Mammary epithelial cell (primary cell): ENCODE measurements at regions of chr1 and their contacts with region 1.

Region 1: GRCh38 chr1:55848906-55849305 is 633.7 kb upstream of the USP24 start:
- DNase-seq: peak; percentile 20
- H3K4me3 ChIP-seq: no peak overlapping the region
- H3K27ac ChIP-seq: no peak overlapping the region
- H3K4me1 ChIP-seq: no peaks in the 10 kb centered on the region
- H3K27me3 ChIP-seq: no peaks in the 10 kb centered on the region
- CTCF ChIP-seq: peak in 1 of 2 donors; percentile 64

Region 2: GRCh38 chr1:55478742-55479141 is 370.2 kb before region 1 on chr1:
- CTCF ChIA-PET with region 1: no interaction called
- dilution Hi-C with region 1: no loop called
- in situ Hi-C with region 1: no loop called
- intact Hi-C with region 1: loop called (anchors 2 kb)
- DNase-seq: peak; percentile 21
- H3K4me3 ChIP-seq: no peak overlapping the region
- H3K27ac ChIP-seq: no peak overlapping the region
- H3K4me1 ChIP-seq: peaks cover 3% of the 10 kb centered on the region
- H3K27me3 ChIP-seq: no peaks in the 10 kb centered on the region
- CTCF ChIP-seq: peak; percentile 43

Region 3: GRCh38 chr1:55506686-55507577 is 342.0 kb before region 1 on chr1:
- CTCF ChIA-PET with region 1: no interaction called
- dilution Hi-C with region 1: no loop called
- in situ Hi-C with region 1: no loop called
- intact Hi-C with region 1: loop called (anchors 5 kb)
- DNase-seq: peak; percentile 40
- H3K4me3 ChIP-seq: no peak overlapping the region
- H3K27ac ChIP-seq: no peak overlapping the region
- H3K4me1 ChIP-seq: peaks cover 11% of the 10 kb centered on the region
- H3K27me3 ChIP-seq: no peaks in the 10 kb centered on the region
- CTCF ChIP-seq: no peak

Region 4: DNA sequence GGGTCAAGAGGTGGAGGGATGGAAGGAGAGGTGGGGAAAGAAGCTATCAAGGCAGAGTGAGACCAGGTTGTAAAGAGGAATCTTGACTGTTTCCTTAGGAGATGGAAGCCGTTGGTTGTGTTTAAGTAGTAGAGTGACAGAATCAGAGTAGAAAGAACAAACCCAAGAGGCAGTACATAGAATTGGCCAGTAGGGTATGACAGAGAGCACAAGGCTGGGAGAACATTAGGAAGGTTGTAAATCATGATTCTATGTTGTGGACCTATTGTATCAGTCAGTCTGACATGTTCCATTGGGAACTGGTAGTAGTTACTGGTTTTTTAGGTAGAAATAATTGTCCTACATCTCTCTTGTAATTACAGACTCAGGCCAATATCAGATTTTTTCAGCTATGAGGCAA is 146.8 kb before region 1 on chr1:
- CTCF ChIA-PET with region 1: no interaction called
- dilution Hi-C with region 1: no loop called
- in situ Hi-C with region 1: no loop called
- intact Hi-C with region 1: loop called (anchors 5 kb)
- DNase-seq: peak; percentile 26
- H3K4me3 ChIP-seq: no peak overlapping the region
- H3K27ac ChIP-seq: no peak overlapping the region
- H3K4me1 ChIP-seq: no peaks in the 10 kb centered on the region
- H3K27me3 ChIP-seq: no peaks in the 10 kb centered on the region
- CTCF ChIP-seq: peak; percentile 95 to 96

Region 5: DNA sequence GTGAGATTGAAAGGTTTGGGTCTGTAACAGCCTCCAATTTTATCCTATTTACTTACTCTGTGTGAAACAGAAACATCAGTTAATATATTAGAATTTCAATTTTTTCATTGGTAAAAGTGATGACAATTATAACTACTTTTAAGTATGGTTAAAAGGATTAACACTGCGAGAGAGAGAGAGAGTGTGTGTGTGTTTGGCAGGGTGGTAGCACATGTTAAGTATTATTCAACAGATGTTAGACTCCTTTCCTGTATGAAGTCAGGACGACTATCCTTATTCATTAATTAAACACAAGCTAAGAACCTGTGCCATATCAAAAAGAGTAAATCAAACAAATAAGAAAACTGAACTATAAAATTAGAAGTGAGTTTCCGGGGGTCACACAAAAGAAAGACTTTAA is 68.0 kb after region 1 on chr1:
- CTCF ChIA-PET with region 1: no interaction called
- dilution Hi-C with region 1: no loop called
- in situ Hi-C with region 1: no loop called
- intact Hi-C with region 1: no loop called
- DNase-seq: no peak
- H3K4me3 ChIP-seq: no peak overlapping the region
- H3K27ac ChIP-seq: no peak overlapping the region
- H3K4me1 ChIP-seq: no peaks in the 10 kb centered on the region
- H3K27me3 ChIP-seq: no peaks in the 10 kb centered on the region
- CTCF ChIP-seq: no peak